Brain microvascular endothelial cell (primary cell): ENCODE measurements at regions of chr4 and their contacts with region 1.

Region 1: DNA sequence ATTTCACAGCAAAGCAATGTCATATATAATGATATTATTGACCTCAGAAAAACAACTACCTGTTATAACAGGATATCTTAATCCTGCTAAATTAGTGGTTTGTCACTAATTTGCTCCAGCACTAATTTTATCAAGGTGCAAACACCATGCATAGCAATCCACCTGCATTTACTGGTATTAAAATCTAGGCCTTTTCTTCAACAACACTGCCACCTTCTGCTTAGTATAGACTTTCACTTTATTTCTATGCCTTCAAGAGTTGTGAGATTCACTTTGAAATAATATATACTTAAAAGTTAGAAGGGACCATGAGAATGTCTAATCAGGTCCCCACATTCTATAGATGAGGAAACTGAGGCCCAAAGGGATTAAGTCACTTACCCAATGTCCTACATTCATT is 82.1 kb upstream of the IQCM start:
- DNase-seq: no peak
- H3K4me3 ChIP-seq: no peak overlapping the region
- H3K27ac ChIP-seq: no peak overlapping the region
- H3K27me3 ChIP-seq: no peaks in the 10 kb centered on the region
- CTCF ChIP-seq: peak; percentile 38

Region 2: GRCh38 chr4:149398993-149399392 is 498.8 kb before region 1 on chr4:
- in situ Hi-C with region 1: loop called (anchors 25 kb)
- DNase-seq: no peak
- H3K4me3 ChIP-seq: no peak overlapping the region
- H3K27ac ChIP-seq: no peak overlapping the region
- H3K27me3 ChIP-seq: no peaks in the 10 kb centered on the region
- CTCF ChIP-seq: no peak